ENCODE measurements at regions of chr2 and their contacts with region 1.

Region 1: GRCh38 chr2:219160186-219161017 is at the start of gene NHEJ1:
- DNase-seq: peak; percentile 94 to 95
- ATAC-seq: peak; percentile 94 to 96
- H3K4me3 ChIP-seq: peak within 1 kb of the TSS; percentile 54
- H3K27ac ChIP-seq: peak within 1 kb of the TSS; percentile 91 to 95
- H3K4me1 ChIP-seq: peaks cover 9% of the 10 kb centered on the region
- CTCF ChIP-seq: peak; percentile 95
- EP300 ChIP-seq: no peak
- POLR2A ChIP-seq: peak; percentile 80
- RAD21 ChIP-seq: peak; percentile 85 to 91
- polyA plus RNA-seq, gene NHEJ1: 31.8 and 34.7 TPM in 2 replicates

Region 2: GRCh38 chr2:219073413-219074129 is 86.8 kb before region 1 on chr2:
- CTCF ChIA-PET with region 1: interaction called, 15 read pairs
- POLR2A ChIA-PET with region 1: no interaction called
- DNase-seq: peak; percentile 26 to 73
- ATAC-seq: peak; percentile 68 to 92; a peak in 4 of 6 replicates
- H3K4me3 ChIP-seq: no peak overlapping the region
- H3K27ac ChIP-seq: no peak overlapping the region
- H3K4me1 ChIP-seq: no peaks in the 10 kb centered on the region
- CTCF ChIP-seq: peak; percentile 65
- EP300 ChIP-seq: no peak
- POLR2A ChIP-seq: no peak
- RAD21 ChIP-seq: peak; percentile 59 to 63

Region 3: DNA sequence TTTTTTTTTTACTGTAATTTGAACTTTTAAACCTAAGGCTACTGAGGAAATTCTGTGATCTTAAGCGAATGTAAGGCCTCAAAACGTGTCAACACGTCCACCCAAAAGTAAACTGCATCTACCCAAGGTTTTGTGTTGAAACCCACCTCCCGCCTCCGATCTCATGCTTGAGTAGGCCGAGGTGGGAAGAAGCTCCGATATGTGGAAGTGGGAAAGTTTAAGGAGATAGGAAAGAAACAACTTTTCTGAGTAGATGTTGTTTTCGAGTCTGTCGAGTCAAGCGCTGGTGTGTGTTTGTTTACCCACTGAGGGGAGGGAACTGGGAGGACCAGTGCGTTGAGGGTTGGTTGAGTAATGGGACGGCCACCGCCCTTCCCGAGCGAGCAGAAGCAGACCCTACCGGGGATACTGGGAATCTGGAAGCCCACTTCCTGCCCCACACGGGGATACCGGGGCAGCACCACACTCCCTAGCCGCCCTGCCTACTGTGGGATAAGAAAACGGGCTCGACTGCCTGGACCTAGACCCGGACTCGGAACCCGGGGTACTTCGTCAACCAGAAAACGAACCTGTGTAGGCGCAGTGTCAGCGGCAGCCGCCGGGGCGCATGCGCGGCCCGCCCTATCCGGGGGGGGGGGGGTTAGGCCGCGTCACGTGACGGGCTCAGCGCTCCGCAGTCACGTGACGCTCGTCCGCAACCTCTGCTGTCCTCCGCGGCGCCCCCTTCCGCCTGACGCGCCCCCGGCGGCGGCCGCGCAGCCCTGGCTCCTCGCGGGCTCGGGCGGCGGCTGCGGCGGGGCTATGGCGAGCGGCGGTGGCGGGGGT is 17.4 kb after region 1 on chr2 and contains the start of gene RETREG2:
- CTCF ChIA-PET with region 1: interaction called, 117 read pairs
- POLR2A ChIA-PET with region 1: interaction called, 4 read pairs
- DNase-seq: peak; percentile 87 to 94
- ATAC-seq: peak; percentile 83 to 88
- H3K4me3 ChIP-seq: peak within 1 kb of the TSS; percentile 84
- H3K27ac ChIP-seq: peak within 1 kb of the TSS; percentile 83 to 96
- H3K4me1 ChIP-seq: peaks cover 15% of the 10 kb centered on the region
- CTCF ChIP-seq: peak; percentile 54
- EP300 ChIP-seq: no peak
- POLR2A ChIP-seq: peak; percentile 69; the same call in 1 of the 2 replicates
- RAD21 ChIP-seq: no peak
- polyA plus RNA-seq, gene RETREG2: 67.5 and 83.2 TPM in 2 replicates

Region 4: GRCh38 chr2:219302376-219302968 is 142.1 kb after region 1 on chr2:
- CTCF ChIA-PET with region 1: interaction called, 29 read pairs
- POLR2A ChIA-PET with region 1: no interaction called
- DNase-seq: no peak
- ATAC-seq: no peak
- H3K4me3 ChIP-seq: no peak overlapping the region
- H3K27ac ChIP-seq: no peak overlapping the region
- H3K4me1 ChIP-seq: 0 out of 3 replicates have a peak, but pooled peaks cover 3% of the 10 kb centered on the region
- CTCF ChIP-seq: no peak
- EP300 ChIP-seq: no peak
- POLR2A ChIP-seq: no peak
- RAD21 ChIP-seq: no peak

Region 5: GRCh38 chr2:219509780-219510511 is 349.5 kb after region 1 on chr2:
- CTCF ChIA-PET with region 1: no interaction called
- POLR2A ChIA-PET with region 1: no interaction called
- DNase-seq: peak in 1 of 2 experiments; percentile 63
- ATAC-seq: peak; percentile 83 to 93
- H3K4me3 ChIP-seq: peak overlapping the region; percentile 38
- H3K27ac ChIP-seq: peak overlapping the region in 1 of 2 experiments; percentile 80; a peak in 3 of 6 replicates
- H3K4me1 ChIP-seq: peaks cover 12% of the 10 kb centered on the region
- CTCF ChIP-seq: peak; percentile 65
- EP300 ChIP-seq: no peak
- POLR2A ChIP-seq: no peak
- RAD21 ChIP-seq: peak; percentile 33 to 42; a peak in 4 of 5 replicates